Left cardiac atrium (tissue), 4 donors: ENCODE measurements at regions of chr9 and their contacts with region 1.

Region 1: GRCh38 chr9:100714372-100715099 is 136.7 kb downstream of the CAVIN4 start:
- DNase-seq: peak; percentile 58
- ATAC-seq: peak; percentile 67 to 75

Region 2: GRCh38 chr9:100111235-100111634 is 603.3 kb before region 1 on chr9:
- intact Hi-C with region 1: no loop called
- DNase-seq: peak; percentile 90
- ATAC-seq: peak; percentile 99

Region 3: DNA sequence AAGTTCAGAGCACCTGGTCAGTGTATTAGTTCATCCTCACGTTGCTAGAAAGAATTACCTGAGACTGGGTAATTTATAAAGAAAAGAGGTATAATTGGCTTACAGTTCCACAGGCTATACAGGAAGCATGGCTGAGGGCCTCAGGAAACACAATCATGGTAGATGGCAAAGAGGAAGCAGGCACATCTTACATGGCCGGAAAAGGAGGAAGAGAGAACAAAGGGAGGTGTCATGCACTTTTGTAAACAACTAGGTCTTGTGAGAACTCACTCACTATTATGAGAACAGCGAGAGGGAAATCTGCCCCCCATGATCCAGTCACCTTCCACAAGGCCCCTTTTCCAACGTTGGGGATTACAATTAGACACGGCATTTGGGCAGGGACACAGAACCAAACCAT is 165.5 kb before region 1 on chr9:
- intact Hi-C with region 1: no loop called
- DNase-seq: no peak
- ATAC-seq: no peak

Region 4: GRCh38 chr9:100652850-100653249 is 61.7 kb before region 1 on chr9:
- intact Hi-C with region 1: no loop called
- DNase-seq: no peak
- ATAC-seq: no peak

Region 5: DNA sequence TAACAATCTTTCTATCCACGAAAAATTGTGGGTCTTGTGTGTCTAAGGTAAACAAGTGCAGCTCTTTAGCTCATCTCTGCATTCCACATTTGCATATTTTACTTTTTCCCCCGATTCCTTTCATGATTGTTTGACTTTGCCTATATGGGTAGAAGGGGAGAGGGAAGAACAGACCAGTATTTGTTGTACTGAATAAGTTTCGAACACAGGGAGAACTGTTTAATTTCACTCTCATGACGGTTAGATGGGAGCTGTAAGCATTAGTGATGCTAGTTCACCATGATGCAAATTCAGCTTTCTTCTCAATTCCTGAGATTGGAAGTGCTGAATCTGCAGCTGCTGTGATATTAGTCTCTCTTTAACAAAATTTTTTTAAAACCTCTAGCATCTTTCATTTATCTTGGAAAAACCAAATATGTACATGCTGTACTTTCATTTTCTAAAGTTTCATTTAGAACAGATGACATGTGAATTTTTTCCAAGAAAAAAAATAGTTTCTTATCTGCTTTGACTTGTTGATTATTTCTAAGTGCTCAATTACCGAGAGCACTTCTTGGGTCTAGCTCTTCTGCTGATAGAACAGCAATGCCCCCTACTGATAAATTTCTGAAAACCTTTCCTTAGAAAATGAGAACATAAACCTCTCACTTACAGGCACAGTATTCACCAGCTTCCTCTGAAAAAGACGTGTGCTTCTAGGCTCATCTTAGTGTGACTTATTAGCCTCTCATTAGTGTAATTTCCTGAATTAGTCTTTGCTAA is 520.8 kb after region 1 on chr9:
- intact Hi-C with region 1: loop called in 1 of 2 experiments (anchors 10 kb)
- DNase-seq: no peak
- ATAC-seq: peak in 1 of 2 donors; percentile 49

Region 6: DNA sequence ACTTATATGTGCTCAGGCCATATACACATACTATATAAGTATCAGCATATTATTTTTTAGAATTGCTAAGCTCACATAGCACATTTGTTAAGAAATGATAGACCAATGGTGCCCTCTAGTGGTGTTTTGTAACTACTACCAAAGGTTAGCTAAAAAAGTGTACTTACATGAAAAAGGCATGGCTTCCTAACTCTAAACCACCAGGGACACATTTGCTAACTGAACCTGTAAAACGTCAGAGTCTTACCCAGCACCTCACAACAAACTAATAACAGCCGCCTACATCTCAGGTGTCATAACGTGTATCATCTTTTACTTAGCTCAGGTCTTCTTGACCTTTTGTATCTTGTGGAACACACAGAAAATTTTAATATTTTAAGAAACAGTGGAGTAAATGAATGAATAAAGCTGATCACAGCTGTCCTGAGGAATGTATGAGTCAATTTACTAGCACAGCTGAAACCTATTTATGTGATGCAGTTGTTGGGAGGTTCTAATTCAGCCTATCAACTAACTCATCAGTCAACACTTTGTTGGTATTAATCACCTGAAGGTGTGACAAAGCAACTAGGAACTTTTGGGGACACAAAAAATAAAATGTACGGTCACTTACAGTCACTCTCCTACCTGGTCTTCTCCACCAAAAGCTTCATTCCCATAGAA is 597.4 kb after region 1 on chr9:
- intact Hi-C with region 1: loop called (anchors 1 to 5 kb)
- DNase-seq: no peak
- ATAC-seq: peak in 1 of 2 donors; percentile 22